ENCODE measurements at regions of chr3 and their contacts with region 1.

Region 1: DNA sequence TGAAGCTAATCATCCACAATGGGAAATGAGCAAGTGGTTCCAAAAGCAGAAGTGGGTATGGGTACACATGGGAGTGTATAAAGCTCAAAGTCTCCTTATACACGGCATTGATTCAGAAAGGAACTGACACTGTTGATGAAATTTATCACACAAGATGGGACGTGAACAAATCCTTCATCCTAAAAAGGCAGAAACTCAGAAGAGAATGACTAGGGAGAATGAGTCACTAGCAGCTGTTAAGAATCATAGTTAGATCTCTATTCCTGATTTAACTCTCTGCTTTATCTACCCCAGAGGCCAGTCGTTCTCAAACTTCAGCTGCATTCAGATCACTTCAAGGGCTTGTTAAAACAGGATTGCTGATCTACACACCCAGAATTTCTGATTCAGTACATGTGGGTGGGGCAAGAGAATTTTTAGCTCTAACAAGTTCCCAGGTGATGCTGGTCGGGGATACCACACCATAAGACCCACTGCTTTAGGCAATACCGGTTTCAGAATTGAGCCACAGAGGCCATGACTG is 97.7 kb upstream of the PHLDB2 start:
- DNase-seq: no peak
- ATAC-seq: peak; percentile 75
- H3K4me3 ChIP-seq: no peak overlapping the region
- H3K27ac ChIP-seq: no peak overlapping the region
- H3K4me1 ChIP-seq: no peaks in the 10 kb centered on the region
- H3K27me3 ChIP-seq: no peaks in the 10 kb centered on the region
- CTCF ChIP-seq: no peak
- EP300 ChIP-seq: no peak; a peak in 1 of 4 replicates
- POLR2A ChIP-seq: no peak
- RAD21 ChIP-seq: no peak

Region 2: GRCh38 chr3:111723293-111724215 is 37.8 kb before region 1 on chr3:
- CTCF ChIA-PET with region 1: interaction called, 3 read pairs
- POLR2A ChIA-PET with region 1: interaction called, 3 read pairs
- RAD21 ChIA-PET with region 1: interaction called, 11 read pairs
- SMC1A ChIA-PET with region 1: interaction called, 15 read pairs
- in situ Hi-C with region 1: no loop called
- intact Hi-C with region 1: no loop called
- DNase-seq: no peak
- ATAC-seq: peak; percentile 48; the same call in 2 of the 3 replicates
- H3K4me3 ChIP-seq: no peak overlapping the region
- H3K27ac ChIP-seq: no peak overlapping the region
- H3K4me1 ChIP-seq: peaks cover 8% of the 10 kb centered on the region
- H3K27me3 ChIP-seq: no peaks in the 10 kb centered on the region
- CTCF ChIP-seq: no peak
- EP300 ChIP-seq: no peak
- POLR2A ChIP-seq: no peak
- RAD21 ChIP-seq: no peak

Region 3: GRCh38 chr3:111781561-111782446 is 20.4 kb after region 1 on chr3:
- CTCF ChIA-PET with region 1: interaction called, 5 read pairs
- POLR2A ChIA-PET with region 1: no interaction called
- RAD21 ChIA-PET with region 1: no interaction called
- SMC1A ChIA-PET with region 1: interaction called, 10 read pairs
- in situ Hi-C with region 1: no loop called
- intact Hi-C with region 1: no loop called
- DNase-seq: no peak
- ATAC-seq: no peak
- H3K4me3 ChIP-seq: no peak overlapping the region
- H3K27ac ChIP-seq: no peak overlapping the region
- H3K4me1 ChIP-seq: no peaks in the 10 kb centered on the region
- H3K27me3 ChIP-seq: no peaks in the 10 kb centered on the region
- CTCF ChIP-seq: no peak
- EP300 ChIP-seq: no peak
- POLR2A ChIP-seq: no peak
- RAD21 ChIP-seq: no peak

Region 4: GRCh38 chr3:111810909-111811308 is 49.5 kb after region 1 on chr3:
- CTCF ChIA-PET with region 1: interaction called, 3 read pairs
- POLR2A ChIA-PET with region 1: no interaction called
- RAD21 ChIA-PET with region 1: no interaction called
- SMC1A ChIA-PET with region 1: interaction called, 10 read pairs
- in situ Hi-C with region 1: no loop called
- intact Hi-C with region 1: no loop called
- DNase-seq: no peak
- ATAC-seq: no peak
- H3K4me3 ChIP-seq: no peak overlapping the region
- H3K27ac ChIP-seq: no peak overlapping the region
- H3K4me1 ChIP-seq: no peaks in the 10 kb centered on the region
- H3K27me3 ChIP-seq: no peaks in the 10 kb centered on the region
- CTCF ChIP-seq: no peak
- EP300 ChIP-seq: no peak
- POLR2A ChIP-seq: no peak
- RAD21 ChIP-seq: no peak

Region 5: DNA sequence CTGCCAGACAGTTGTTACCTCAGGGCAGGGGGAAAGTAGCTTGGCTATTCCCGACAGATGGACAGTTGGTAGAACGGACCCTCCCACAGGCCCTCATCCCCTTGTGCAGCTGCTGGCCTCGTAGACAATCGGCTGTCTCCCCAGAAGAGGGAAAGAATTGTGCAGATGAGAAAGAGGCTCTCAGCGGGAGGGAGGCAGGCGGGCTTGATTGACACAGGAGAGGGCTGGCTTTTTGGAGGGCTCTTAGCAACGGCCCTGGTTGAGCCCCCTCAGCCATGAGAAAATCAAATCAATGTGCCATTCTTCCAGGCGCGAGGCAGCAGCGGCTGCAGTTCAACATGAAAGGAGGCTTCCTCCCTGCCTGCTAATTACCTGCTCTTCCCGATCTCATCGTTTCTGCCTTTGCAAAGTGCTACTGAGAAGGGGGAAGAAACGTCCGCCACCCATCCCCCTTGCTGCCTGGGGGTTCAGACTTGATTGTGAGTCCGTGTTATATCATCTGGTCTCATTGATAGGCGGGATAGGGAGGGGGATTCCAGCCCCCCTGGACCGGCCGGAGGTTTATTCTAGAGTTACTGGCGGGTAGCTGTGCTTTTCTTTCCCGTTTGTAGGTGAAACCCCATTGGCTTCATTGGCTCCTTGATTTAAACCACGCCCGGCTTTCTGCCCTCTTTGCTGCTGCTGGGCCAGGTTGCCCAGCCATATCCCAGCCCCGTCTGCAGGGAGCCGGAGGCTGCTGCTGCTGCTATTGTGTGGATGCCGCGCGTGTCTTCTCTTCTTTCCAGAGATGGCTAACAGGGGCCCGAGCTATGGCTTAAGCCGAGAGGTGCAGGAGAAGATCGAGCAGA is 237.5 kb after region 1 on chr3 and contains the start of gene TAGLN3:
- CTCF ChIA-PET with region 1: no interaction called
- POLR2A ChIA-PET with region 1: no interaction called
- RAD21 ChIA-PET with region 1: no interaction called
- SMC1A ChIA-PET with region 1: no interaction called
- in situ Hi-C with region 1: no loop called
- intact Hi-C with region 1: no loop called
- DNase-seq: no peak
- ATAC-seq: peak; percentile 66
- H3K4me3 ChIP-seq: peak within 1 kb of the TSS; percentile 66
- H3K27ac ChIP-seq: no peak within 1 kb of the TSS
- H3K4me1 ChIP-seq: peaks cover 6% of the 10 kb centered on the region; the same call in 1 of the 2 replicates
- H3K27me3 ChIP-seq: peaks cover 0 to 2% of the 10 kb centered on the region in 2 experiments; a peak in 3 of 4 replicates
- CTCF ChIP-seq: no peak
- EP300 ChIP-seq: no peak
- POLR2A ChIP-seq: no peak
- RAD21 ChIP-seq: no peak
- polyA plus RNA-seq, gene TAGLN3: 0.07 TPM in 1 of 2 experiments, not detected in the other

Region 6: DNA sequence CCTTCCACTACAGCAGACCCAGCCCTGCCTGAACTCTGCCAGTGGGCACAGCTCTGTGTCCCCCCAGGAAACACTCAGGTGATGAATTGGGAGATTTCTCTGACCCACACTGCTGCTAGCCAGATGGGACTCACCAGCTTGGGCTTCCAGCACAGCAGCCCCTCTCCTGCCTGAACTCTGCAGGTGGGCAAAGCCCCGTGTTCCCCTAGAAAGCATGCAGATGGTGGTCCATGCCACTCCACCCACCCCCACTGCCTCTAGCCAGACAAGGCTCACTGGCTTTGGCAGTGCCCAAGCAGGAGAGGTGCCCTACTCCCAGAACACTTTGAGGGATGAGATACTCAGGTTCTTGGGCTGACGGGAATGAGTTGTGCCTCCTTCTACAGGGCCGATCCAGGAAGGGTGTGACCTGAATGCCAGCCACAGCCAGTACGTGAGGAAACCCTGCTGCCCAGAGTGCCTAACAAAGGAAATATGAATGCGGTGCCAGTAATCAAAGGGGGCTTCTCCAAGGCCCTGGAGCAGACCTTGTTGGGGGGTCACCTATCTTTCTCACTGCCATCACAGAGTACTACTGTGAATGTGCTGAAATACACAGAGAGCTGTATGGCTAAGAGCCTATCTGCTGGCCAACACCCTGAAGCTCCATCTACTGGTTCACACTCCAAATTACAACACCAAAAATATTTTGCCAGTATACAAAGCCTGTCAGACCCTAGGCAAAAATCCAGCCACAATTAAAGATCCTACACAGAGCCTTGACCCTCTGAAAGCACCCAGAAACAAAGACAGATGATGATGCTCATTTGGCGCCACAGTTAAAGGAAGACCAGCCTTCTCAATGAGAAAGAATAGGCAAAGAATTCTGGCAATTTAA is 676.0 kb after region 1 on chr3:
- CTCF ChIA-PET with region 1: no interaction called
- POLR2A ChIA-PET with region 1: no interaction called
- RAD21 ChIA-PET with region 1: no interaction called
- SMC1A ChIA-PET with region 1: no interaction called
- in situ Hi-C with region 1: no loop called
- intact Hi-C with region 1: no loop called
- DNase-seq: no peak
- ATAC-seq: peak; percentile 79
- H3K4me3 ChIP-seq: no peak overlapping the region
- H3K27ac ChIP-seq: no peak overlapping the region
- H3K4me1 ChIP-seq: peaks cover 5% of the 10 kb centered on the region
- H3K27me3 ChIP-seq: no peaks in the 10 kb centered on the region
- CTCF ChIP-seq: peak; percentile 22 to 62 (median 28); a peak in 4 of 6 replicates
- EP300 ChIP-seq: no peak
- POLR2A ChIP-seq: no peak
- RAD21 ChIP-seq: peak; percentile 84

Measured in GM12878 (cell line).